CD8-positive, alpha-beta memory T cell (primary cell): ENCODE measurements at regions of chr14 and their contacts with region 1.

Region 1: DNA sequence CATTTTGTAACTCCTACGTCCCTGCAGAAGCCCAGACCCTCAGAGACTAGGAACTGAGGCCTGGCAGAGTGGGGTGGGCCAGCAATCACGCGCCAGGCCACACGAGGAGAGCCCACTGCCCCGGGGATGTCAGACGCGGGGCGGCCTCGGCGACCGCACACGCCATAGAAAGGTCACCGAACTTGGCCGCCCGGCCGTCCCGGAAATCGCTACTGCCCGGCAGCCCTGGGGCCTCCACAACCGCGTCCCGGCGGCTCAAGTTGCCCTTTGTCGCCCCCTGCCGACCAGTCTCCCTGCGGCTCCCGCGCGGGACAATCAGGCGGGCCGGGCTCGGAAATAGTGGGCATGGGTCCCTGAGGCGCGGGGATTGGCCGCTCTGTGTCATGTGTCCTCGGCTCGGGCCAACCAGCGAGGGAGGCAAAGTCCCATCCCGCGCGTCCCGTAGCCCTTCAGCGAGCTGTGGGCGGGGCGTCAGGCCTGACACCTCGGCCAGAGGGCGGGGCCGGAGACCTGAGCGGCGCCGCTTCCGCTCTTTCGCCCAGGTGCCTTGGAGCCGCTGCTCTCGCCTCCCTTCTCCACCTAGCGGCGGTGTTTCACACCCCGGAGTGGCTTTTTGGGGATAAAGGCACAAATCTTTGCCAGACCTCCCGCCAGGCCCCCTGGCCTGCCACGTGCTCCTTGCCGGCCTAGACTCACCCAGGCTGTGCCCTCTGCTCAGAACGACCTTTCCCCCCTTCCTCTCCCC is 33.4 kb upstream of the DEGS2 start:
- DNase-seq: peak; percentile 99 to 100 (median 100)
- H3K4me3 ChIP-seq: peak overlapping the region; percentile 47
- H3K4me3 Mint-ChIP-seq: peak overlapping the region; percentile 48 to 82 (median 68)
- H3K27ac ChIP-seq: peak overlapping the region; percentile 75
- H3K27ac Mint-ChIP-seq: peak overlapping the region; percentile 89 to 95 (median 91)
- H3K4me1 ChIP-seq: peaks cover 13% of the 10 kb centered on the region
- H3K4me1 Mint-ChIP-seq: peaks cover 10 to 13% (median 12%) of the 10 kb centered on the region in 3 donors
- H3K27me3 ChIP-seq: no peaks in the 10 kb centered on the region
- H3K27me3 Mint-ChIP-seq: no peaks in the 10 kb centered on the region

Region 2: DNA sequence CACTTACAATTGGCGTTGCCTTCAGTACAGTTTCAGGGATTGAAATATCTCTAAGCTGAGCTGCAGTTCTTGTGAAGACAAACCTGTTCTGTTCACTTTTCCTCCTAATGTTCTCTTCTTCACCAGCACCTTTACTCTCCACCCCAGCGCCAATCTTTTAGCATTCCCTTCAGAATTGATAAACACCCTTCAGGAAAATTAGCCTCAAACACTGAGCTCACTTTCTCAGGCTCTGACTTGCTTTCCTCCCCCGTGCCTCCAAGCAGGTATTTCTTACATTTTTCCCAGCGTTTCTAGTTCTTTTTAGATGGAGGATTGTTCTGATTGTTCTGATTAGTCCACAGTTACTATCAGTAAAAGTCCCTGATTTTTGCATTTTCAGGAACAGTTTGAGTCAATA is 216.2 kb before region 1 on chr14:
- CTCF ChIA-PET with region 1: interaction called, 69 read pairs
- POLR2A ChIA-PET with region 1: interaction called, 3 read pairs
- DNase-seq: no peak
- H3K4me3 ChIP-seq: no peak overlapping the region
- H3K4me3 Mint-ChIP-seq: no peak overlapping the region
- H3K27ac ChIP-seq: no peak overlapping the region
- H3K27ac Mint-ChIP-seq: no peak overlapping the region
- H3K4me1 ChIP-seq: peaks cover 3% of the 10 kb centered on the region
- H3K4me1 Mint-ChIP-seq: peaks cover 12 to 15% (median 15%) of the 10 kb centered on the region in 3 donors
- H3K27me3 ChIP-seq: no peaks in the 10 kb centered on the region
- H3K27me3 Mint-ChIP-seq: peaks cover 0 to 1% of the 10 kb centered on the region in 2 donors

Region 3: GRCh38 chr14:100062590-100062989 is 130.3 kb before region 1 on chr14:
- CTCF ChIA-PET with region 1: interaction called, 60 read pairs
- POLR2A ChIA-PET with region 1: no interaction called
- DNase-seq: peak in 1 of 5 donors; percentile 50
- H3K4me3 ChIP-seq: peak overlapping the region; percentile 41
- H3K4me3 Mint-ChIP-seq: peak overlapping the region; percentile 79 to 100 (median 89)
- H3K27ac ChIP-seq: no peak overlapping the region
- H3K27ac Mint-ChIP-seq: peak overlapping the region; percentile 92 to 100 (median 99)
- H3K4me1 ChIP-seq: peaks cover 75% of the 10 kb centered on the region
- H3K4me1 Mint-ChIP-seq: peaks cover 72 to 81% (median 77%) of the 10 kb centered on the region in 3 donors
- H3K27me3 ChIP-seq: no peaks in the 10 kb centered on the region
- H3K27me3 Mint-ChIP-seq: peaks cover 0 to 1% of the 10 kb centered on the region in 2 donors

Region 4: GRCh38 chr14:100108042-100108825 is 84.6 kb before region 1 on chr14:
- CTCF ChIA-PET with region 1: interaction called, 15 read pairs
- POLR2A ChIA-PET with region 1: no interaction called
- DNase-seq: peak; percentile 75 to 90 (median 84)
- H3K4me3 ChIP-seq: no peak overlapping the region
- H3K4me3 Mint-ChIP-seq: peak overlapping the region; percentile 14 to 82 (median 58)
- H3K27ac ChIP-seq: peak overlapping the region; percentile 10
- H3K27ac Mint-ChIP-seq: peak overlapping the region; percentile 86 to 97 (median 96)
- H3K4me1 ChIP-seq: peaks cover 63% of the 10 kb centered on the region
- H3K4me1 Mint-ChIP-seq: peaks cover 75 to 89% (median 77%) of the 10 kb centered on the region in 3 donors
- H3K27me3 ChIP-seq: no peaks in the 10 kb centered on the region
- H3K27me3 Mint-ChIP-seq: peaks cover 0 to 6% of the 10 kb centered on the region in 2 donors

Region 5: GRCh38 chr14:100173353-100173752 is 19.5 kb before region 1 on chr14:
- CTCF ChIA-PET with region 1: interaction called, 12 read pairs
- POLR2A ChIA-PET with region 1: no interaction called
- DNase-seq: no peak
- H3K4me3 ChIP-seq: no peak overlapping the region
- H3K4me3 Mint-ChIP-seq: no peak overlapping the region
- H3K27ac ChIP-seq: no peak overlapping the region
- H3K27ac Mint-ChIP-seq: peak overlapping the region in 1 of 8 donors; percentile 61
- H3K4me1 ChIP-seq: no peaks in the 10 kb centered on the region
- H3K4me1 Mint-ChIP-seq: peaks cover 2 to 5% (median 4%) of the 10 kb centered on the region in 3 donors
- H3K27me3 ChIP-seq: no peaks in the 10 kb centered on the region
- H3K27me3 Mint-ChIP-seq: peaks cover 13 to 23% of the 10 kb centered on the region in 2 donors

Region 6: GRCh38 chr14:100221533-100222223 is 28.8 kb after region 1 on chr14:
- CTCF ChIA-PET with region 1: interaction called, 48 read pairs
- POLR2A ChIA-PET with region 1: interaction called, 5 read pairs
- DNase-seq: peak; percentile 45 to 79 (median 58)
- H3K4me3 ChIP-seq: peak overlapping the region; percentile 80
- H3K4me3 Mint-ChIP-seq: no peak overlapping the region
- H3K27ac ChIP-seq: peak overlapping the region; percentile 49
- H3K27ac Mint-ChIP-seq: no peak overlapping the region
- H3K4me1 ChIP-seq: peaks cover 47% of the 10 kb centered on the region
- H3K4me1 Mint-ChIP-seq: peaks cover 5 to 6% (median 6%) of the 10 kb centered on the region in 3 donors
- H3K27me3 ChIP-seq: no peaks in the 10 kb centered on the region
- H3K27me3 Mint-ChIP-seq: no peaks in the 10 kb centered on the region

Region 7: GRCh38 chr14:100256339-100256895 is 63.6 kb after region 1 on chr14:
- CTCF ChIA-PET with region 1: interaction called, 11 read pairs
- POLR2A ChIA-PET with region 1: no interaction called
- DNase-seq: no peak
- H3K4me3 ChIP-seq: no peak overlapping the region
- H3K4me3 Mint-ChIP-seq: peak overlapping the region in 4 of 7 donors; percentile 16 to 54 (median 20)
- H3K27ac ChIP-seq: no peak overlapping the region
- H3K27ac Mint-ChIP-seq: peak overlapping the region in 5 of 8 donors; percentile 0 to 61 (median 3)
- H3K4me1 ChIP-seq: peaks cover 78% of the 10 kb centered on the region
- H3K4me1 Mint-ChIP-seq: peaks cover 67 to 92% (median 90%) of the 10 kb centered on the region in 3 donors
- H3K27me3 ChIP-seq: no peaks in the 10 kb centered on the region
- H3K27me3 Mint-ChIP-seq: no peaks in the 10 kb centered on the region

Region 8: DNA sequence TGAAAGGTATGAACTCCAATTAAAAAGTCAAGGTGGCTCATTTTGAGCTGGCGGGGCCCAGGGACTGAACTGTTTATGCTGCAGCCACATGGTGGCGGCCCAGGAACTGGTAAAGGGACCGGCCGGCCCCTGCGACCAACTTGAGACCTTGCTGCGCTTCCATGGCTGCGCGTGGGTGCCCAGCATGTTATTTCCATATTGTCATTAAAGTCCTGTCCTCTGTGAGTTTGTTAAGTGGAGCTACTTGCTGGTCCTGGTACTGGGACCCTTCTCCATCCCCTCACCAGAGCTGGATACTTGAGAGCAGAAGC is 332.0 kb after region 1 on chr14:
- CTCF ChIA-PET with region 1: no interaction called
- POLR2A ChIA-PET with region 1: no interaction called
- DNase-seq: no peak
- H3K4me3 ChIP-seq: no peak overlapping the region
- H3K4me3 Mint-ChIP-seq: no peak overlapping the region
- H3K27ac ChIP-seq: no peak overlapping the region
- H3K27ac Mint-ChIP-seq: no peak overlapping the region
- H3K4me1 ChIP-seq: no peaks in the 10 kb centered on the region
- H3K4me1 Mint-ChIP-seq: no peaks in the 10 kb centered on the region
- H3K27me3 ChIP-seq: no peaks in the 10 kb centered on the region
- H3K27me3 Mint-ChIP-seq: no peaks in the 10 kb centered on the region